HepG2 (cell line): ENCODE measurements at regions of chr16 and their contacts with region 1.

Region 1: GRCh38 chr16:12095275-12096156 is 119.0 kb downstream of the SNX29 start:
- DNase-seq: peak; percentile 61
- ATAC-seq: no peak
- H3K4me3 ChIP-seq: no peak overlapping the region
- H3K27ac ChIP-seq: no peak overlapping the region
- H3K4me1 ChIP-seq: peaks cover 73% of the 10 kb centered on the region
- H3K27me3 ChIP-seq: no peaks in the 10 kb centered on the region
- CTCF ChIP-seq: peak; percentile 94
- EP300 ChIP-seq: no peak
- POLR2A ChIP-seq: no peak
- RAD21 ChIP-seq: peak; percentile 95

Region 2: GRCh38 chr16:11977376-11978041 is 118.0 kb before region 1 on chr16:
- CTCF ChIA-PET with region 1: no interaction called
- POLR2A ChIA-PET with region 1: interaction called, 12 read pairs
- in situ Hi-C with region 1: no loop called
- intact Hi-C with region 1: no loop called
- DNase-seq: no peak
- ATAC-seq: peak; percentile 4
- H3K4me3 ChIP-seq: peak overlapping the region; percentile 75 to 91 (median 87)
- H3K27ac ChIP-seq: no peak overlapping the region
- H3K4me1 ChIP-seq: peaks cover 43% of the 10 kb centered on the region
- H3K27me3 ChIP-seq: no peaks in the 10 kb centered on the region; a peak in 1 of 5 replicates
- CTCF ChIP-seq: no peak
- EP300 ChIP-seq: no peak
- POLR2A ChIP-seq: no peak
- RAD21 ChIP-seq: no peak

Region 3: GRCh38 chr16:12215277-12216105 is 120.0 kb after region 1 on chr16:
- CTCF ChIA-PET with region 1: interaction called, 43 read pairs
- POLR2A ChIA-PET with region 1: interaction called, 127 read pairs
- in situ Hi-C with region 1: loop called (anchors 5 kb)
- intact Hi-C with region 1: loop called (anchors 1 kb)
- DNase-seq: peak; percentile 36
- ATAC-seq: no peak
- H3K4me3 ChIP-seq: no peak overlapping the region
- H3K27ac ChIP-seq: no peak overlapping the region
- H3K4me1 ChIP-seq: peaks cover 50% of the 10 kb centered on the region
- H3K27me3 ChIP-seq: no peaks in the 10 kb centered on the region; a peak in 1 of 5 replicates
- CTCF ChIP-seq: peak; percentile 80
- EP300 ChIP-seq: no peak
- POLR2A ChIP-seq: no peak
- RAD21 ChIP-seq: peak; percentile 93

Region 4: DNA sequence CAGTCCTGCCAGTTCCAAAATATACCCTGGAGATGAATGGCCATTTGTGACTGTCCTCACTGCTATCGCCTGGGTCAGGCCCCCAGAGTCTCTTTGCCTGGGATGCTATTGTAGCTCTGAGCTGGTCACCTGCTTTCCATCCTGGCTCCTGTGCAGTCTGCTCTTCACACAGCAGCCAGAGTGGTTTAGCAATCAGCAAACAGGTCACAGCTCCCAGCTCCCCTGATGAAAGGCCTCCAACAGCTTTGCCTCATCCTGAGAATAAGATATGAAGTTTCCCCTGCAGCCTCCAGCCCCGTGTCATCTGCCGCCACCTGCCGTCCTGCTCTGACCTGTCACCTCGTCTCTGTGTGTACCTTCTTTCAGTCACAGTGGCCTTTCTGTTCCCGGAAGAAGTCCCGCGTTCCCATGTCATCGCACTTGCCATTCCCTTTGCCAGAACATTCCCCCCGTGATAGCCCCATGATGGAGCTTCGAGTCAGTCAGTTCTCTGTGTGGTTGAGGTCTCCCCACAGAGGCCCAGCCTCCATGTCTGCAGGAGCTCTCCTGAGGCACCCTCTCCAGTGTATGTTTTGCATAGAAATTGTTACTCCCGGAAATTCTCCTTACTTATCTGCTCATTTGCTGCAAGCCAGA is 162.5 kb after region 1 on chr16:
- CTCF ChIA-PET with region 1: interaction called, 41 read pairs
- POLR2A ChIA-PET with region 1: interaction called, 88 read pairs
- in situ Hi-C with region 1: loop called (anchors 5 kb)
- intact Hi-C with region 1: loop called (anchors 1 kb)
- DNase-seq: peak; percentile 95
- ATAC-seq: peak; percentile 86
- H3K4me3 ChIP-seq: 0 out of 6 replicates have a peak overlapping the region, but pooled peaks of 2 of the 3 experiments have one; percentile 4 to 10
- H3K27ac ChIP-seq: no peak overlapping the region
- H3K4me1 ChIP-seq: peaks cover 66% of the 10 kb centered on the region
- H3K27me3 ChIP-seq: no peaks in the 10 kb centered on the region
- CTCF ChIP-seq: peak; percentile 100
- EP300 ChIP-seq: peak in 1 of 2 experiments; percentile 68; a peak in 3 of 4 replicates
- POLR2A ChIP-seq: no peak
- RAD21 ChIP-seq: peak; percentile 99

Region 5: DNA sequence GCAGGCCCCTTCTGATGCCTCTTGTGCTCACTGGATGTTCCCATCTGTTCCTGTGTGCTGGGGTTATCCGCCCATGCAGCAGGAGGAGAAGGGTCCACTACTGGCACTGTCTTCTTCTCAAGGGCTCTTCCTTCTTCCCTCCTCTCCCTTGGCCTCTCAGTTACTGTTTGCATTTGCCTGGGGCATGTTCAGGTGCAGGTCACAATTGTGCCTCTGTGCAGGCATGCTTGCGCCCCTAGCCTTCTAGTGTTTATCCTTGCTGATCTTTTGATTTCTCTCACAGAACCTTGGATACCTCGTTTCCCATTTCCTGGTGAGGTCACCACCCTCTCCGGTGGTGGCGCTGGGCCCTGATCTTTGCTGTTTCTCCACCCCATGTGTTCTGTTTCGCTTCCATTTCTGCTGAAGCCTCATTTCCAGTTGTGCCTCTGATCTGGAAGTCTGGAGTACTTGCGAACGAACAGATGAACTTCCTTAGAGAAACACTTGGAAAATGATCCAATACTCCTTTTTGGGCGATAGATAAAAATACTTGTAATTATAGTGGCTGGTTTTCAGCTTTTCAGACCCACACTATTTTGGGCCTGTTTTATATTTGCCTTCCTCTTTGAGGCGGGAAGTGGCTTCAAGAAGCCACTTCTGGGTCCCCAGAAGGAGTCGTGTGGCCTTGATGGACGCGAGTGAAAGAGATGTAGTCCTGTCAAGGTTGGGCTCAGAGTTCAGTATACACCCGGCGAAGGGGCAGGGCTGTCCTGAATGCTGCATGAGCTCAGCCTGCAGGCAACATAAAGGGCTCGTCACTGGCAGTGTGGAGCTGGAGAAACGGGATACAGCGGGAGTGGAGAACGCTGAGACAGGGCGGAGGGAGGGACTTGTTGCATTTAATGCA is 193.9 kb after region 1 on chr16:
- CTCF ChIA-PET with region 1: no interaction called
- POLR2A ChIA-PET with region 1: interaction called, 6 read pairs
- in situ Hi-C with region 1: no loop called
- intact Hi-C with region 1: loop called (anchors 1 kb)
- DNase-seq: peak; percentile 89
- ATAC-seq: peak; percentile 94
- H3K4me3 ChIP-seq: peak overlapping the region; percentile 44 to 59 (median 52)
- H3K27ac ChIP-seq: peak overlapping the region; percentile 81
- H3K4me1 ChIP-seq: peaks cover 75% of the 10 kb centered on the region
- H3K27me3 ChIP-seq: no peaks in the 10 kb centered on the region
- CTCF ChIP-seq: peak; percentile 58
- EP300 ChIP-seq: peak; percentile 19 to 74; a peak in 3 of 4 replicates
- POLR2A ChIP-seq: peak; percentile 44 to 57; a peak in 3 of 4 replicates
- RAD21 ChIP-seq: peak; percentile 36; the same call in 1 of the 2 replicates